ENCODE measurements at regions of chr15 and their contacts with region 1.

Region 1: DNA sequence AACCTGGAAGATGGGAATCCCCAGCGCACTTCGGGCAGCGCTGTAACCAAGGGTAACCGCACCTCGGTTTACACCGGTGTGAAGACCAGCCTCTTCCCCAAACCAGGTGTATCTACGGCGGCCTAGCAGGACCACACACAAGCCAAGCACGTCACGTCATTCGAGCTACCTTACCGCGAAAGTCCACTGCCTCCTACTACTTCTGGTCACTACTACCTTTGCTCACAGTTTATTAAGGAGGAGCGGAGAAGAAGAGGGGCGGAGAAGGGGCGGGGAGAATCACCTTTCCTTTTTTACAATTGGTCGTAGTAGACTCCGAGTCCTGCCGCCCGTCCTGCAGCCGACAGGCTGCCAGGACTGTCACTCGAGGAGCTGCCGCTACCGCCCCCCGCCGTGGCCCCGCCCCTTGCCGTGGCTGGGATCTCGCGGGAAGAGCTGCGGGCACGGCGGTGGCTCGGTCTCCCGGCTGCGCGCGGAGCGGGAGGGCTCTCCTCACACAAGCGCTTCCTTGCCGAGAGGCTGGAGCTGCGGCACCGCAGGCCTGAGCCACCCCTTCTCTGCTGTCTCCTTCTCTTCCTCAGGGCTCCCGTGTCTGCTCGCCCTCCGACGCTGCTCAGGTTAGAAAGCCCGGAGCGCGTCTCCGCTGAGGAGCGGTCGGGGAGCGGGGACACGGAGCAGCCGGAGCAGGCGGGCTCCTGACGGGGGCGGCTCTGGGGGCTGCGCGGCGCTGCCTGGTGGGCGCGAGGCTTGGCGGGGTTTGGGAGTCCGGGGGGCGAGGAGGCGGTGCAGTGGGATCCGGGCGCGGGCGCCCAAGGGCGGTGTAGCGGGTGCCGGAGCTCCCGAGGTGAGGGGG is at the start of gene GLCE:
- DNase-seq: peak; percentile 89 to 96 (median 94)
- ATAC-seq: peak; percentile 97
- H3K4me3 ChIP-seq: peak within 1 kb of the TSS; percentile 92
- H3K4me3 Mint-ChIP-seq: peak within 1 kb of the TSS; percentile 90 to 100 (median 97)
- H3K27ac ChIP-seq: peak within 1 kb of the TSS; percentile 76
- H3K27ac Mint-ChIP-seq: peak within 1 kb of the TSS; percentile 76 to 98 (median 90)
- H3K4me1 ChIP-seq: peaks cover 5 to 7% of the 10 kb centered on the region in 2 donors
- H3K4me1 Mint-ChIP-seq: peaks cover 12 to 22% (median 18%) of the 10 kb centered on the region in 7 donors
- H3K27me3 ChIP-seq: no peaks in the 10 kb centered on the region
- H3K27me3 Mint-ChIP-seq: peaks cover 0 to 44% (median 4%) of the 10 kb centered on the region in 5 donors
- total RNA-seq, gene GLCE: 3.0 to 6.1 (median 5.4) TPM

Region 2: DNA sequence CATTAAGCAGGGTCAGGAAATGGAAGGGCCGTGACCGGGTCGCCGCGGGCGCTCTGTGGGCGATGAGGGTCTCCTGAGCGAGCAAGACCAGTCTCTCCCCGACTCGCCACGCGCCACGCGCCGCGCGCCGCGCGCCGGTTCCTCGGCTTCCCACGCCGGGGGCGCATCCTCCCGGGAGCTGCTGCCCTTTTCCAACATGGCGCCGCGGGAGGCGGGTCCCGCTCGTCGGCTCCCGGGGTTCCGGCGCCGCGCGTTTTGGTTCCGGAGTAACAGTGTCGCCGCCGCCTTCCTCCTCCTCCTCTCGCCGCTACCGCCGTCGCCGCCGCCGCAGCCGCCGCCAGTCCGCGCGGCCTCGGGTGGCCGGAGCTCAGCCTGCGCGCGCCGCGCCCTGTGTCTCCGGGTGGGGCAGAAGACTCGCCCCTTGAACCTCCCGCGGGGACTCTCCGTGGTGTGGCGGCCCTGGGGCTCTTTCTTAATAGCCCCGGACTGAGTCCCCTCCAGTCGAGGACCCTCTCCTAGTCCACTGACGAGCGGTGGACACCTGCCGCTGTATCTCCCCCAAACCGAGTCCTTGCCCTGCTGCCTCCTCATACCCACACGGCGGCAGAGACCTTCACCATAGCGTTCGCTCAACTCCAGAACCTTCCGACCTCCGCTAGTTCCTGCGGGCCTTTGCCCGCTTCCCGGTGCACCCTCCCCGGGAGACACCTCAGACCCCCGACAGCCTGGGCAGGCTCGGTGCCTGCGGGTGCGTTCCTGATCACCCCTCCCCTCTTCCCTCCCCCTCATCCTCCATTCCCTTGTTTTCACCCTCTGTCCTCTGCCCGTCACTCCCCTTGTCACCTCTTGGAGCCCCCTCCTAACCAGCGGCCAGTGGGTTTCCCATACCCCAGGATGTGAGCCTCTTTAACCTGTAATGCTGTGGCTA is 1617.7 kb before region 1 on chr15 and contains the start of gene MAP2K5:
- CTCF ChIA-PET with region 1: no interaction called
- POLR2A ChIA-PET with region 1: no interaction called
- intact Hi-C with region 1: loop called in 1 of 2 experiments (anchors 5 kb)
- DNase-seq: peak; percentile 75 to 87 (median 78)
- ATAC-seq: peak; percentile 89
- H3K4me3 ChIP-seq: peak within 1 kb of the TSS; percentile 90
- H3K4me3 Mint-ChIP-seq: peak within 1 kb of the TSS; percentile 92 to 98 (median 98)
- H3K27ac ChIP-seq: peak within 1 kb of the TSS; percentile 78
- H3K27ac Mint-ChIP-seq: peak within 1 kb of the TSS; percentile 97 to 100 (median 99)
- H3K4me1 ChIP-seq: peaks cover 7 to 22% of the 10 kb centered on the region in 2 donors
- H3K4me1 Mint-ChIP-seq: peaks cover 20 to 68% (median 56%) of the 10 kb centered on the region in 7 donors
- H3K27me3 ChIP-seq: no peaks in the 10 kb centered on the region
- H3K27me3 Mint-ChIP-seq: no peaks in the 10 kb centered on the region
- total RNA-seq, gene MAP2K5: 23.4 to 43.4 (median 35.7) TPM

Region 3: GRCh38 chr15:69058830-69059556 is 101.4 kb before region 1 on chr15:
- CTCF ChIA-PET with region 1: no interaction called
- POLR2A ChIA-PET with region 1: no interaction called
- intact Hi-C with region 1: loop called in 1 of 2 experiments (anchors 1 kb)
- DNase-seq: peak; percentile 29 to 69 (median 59)
- ATAC-seq: peak; percentile 66
- H3K4me3 ChIP-seq: no peak overlapping the region
- H3K4me3 Mint-ChIP-seq: peak overlapping the region in 5 of 10 donors; percentile 21 to 61 (median 52)
- H3K27ac ChIP-seq: no peak overlapping the region
- H3K27ac Mint-ChIP-seq: peak overlapping the region in 4 of 9 donors; percentile 30 to 78 (median 58)
- H3K4me1 ChIP-seq: peaks cover 7 to 23% of the 10 kb centered on the region in 2 donors
- H3K4me1 Mint-ChIP-seq: peaks cover 5 to 38% (median 33%) of the 10 kb centered on the region in 7 donors
- H3K27me3 ChIP-seq: no peaks in the 10 kb centered on the region
- H3K27me3 Mint-ChIP-seq: peaks cover 0 to 18% (median 5%) of the 10 kb centered on the region in 5 donors

Region 4: DNA sequence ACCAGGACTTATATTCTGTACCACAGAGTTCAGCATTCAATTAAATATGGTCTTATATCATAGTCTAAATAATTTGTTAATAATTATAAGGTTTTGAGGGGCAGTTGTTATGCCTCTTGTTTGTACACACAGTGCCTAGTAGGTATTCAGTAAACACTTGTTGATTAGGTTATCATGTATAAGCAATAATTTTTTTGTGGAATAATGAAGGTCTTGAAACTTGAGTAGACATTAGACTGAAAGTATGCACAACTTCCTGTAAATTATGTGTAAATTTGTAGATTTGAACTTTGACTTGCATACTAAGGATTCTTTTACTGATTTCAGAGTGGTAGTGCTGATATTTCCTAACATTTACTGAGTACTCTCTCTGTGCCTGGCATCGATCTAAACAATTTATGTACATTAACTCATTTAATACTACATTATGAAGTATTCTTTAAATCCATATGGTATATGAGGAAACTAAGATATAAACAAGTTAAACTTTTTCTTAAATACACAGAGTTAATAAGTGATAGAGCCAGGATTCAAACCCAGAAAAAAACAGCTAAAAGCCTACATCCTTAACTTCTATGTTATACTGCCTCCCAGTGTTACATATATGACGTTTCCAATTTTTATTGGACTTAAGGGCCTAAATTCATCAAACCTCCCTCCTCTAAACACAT is 65.1 kb after region 1 on chr15:
- CTCF ChIA-PET with region 1: no interaction called
- POLR2A ChIA-PET with region 1: no interaction called
- intact Hi-C with region 1: no loop called
- DNase-seq: no peak
- ATAC-seq: no peak
- H3K4me3 ChIP-seq: no peak overlapping the region
- H3K4me3 Mint-ChIP-seq: no peak overlapping the region
- H3K27ac ChIP-seq: no peak overlapping the region
- H3K27ac Mint-ChIP-seq: no peak overlapping the region
- H3K4me1 ChIP-seq: no peaks in the 10 kb centered on the region
- H3K4me1 Mint-ChIP-seq: no peaks in the 10 kb centered on the region
- H3K27me3 ChIP-seq: no peaks in the 10 kb centered on the region
- H3K27me3 Mint-ChIP-seq: peaks cover 0 to 4% (median 0%) of the 10 kb centered on the region in 5 donors

Region 5: GRCh38 chr15:69394556-69395282 is 234.4 kb after region 1 on chr15:
- CTCF ChIA-PET with region 1: no interaction called
- POLR2A ChIA-PET with region 1: no interaction called
- intact Hi-C with region 1: loop called in 1 of 2 experiments (anchors 1 kb)
- DNase-seq: peak; percentile 44 to 86 (median 71)
- ATAC-seq: peak; percentile 97
- H3K4me3 ChIP-seq: no peak overlapping the region
- H3K4me3 Mint-ChIP-seq: no peak overlapping the region
- H3K27ac ChIP-seq: no peak overlapping the region
- H3K27ac Mint-ChIP-seq: peak overlapping the region in 1 of 9 donors; percentile 6
- H3K4me1 ChIP-seq: no peaks in the 10 kb centered on the region
- H3K4me1 Mint-ChIP-seq: peaks cover 6 to 12% (median 7%) of the 10 kb centered on the region in 7 donors
- H3K27me3 ChIP-seq: no peaks in the 10 kb centered on the region
- H3K27me3 Mint-ChIP-seq: peaks cover 0 to 8% (median 0%) of the 10 kb centered on the region in 5 donors

Region 6: GRCh38 chr15:69452692-69453521 is 292.5 kb after region 1 on chr15 and contains the start of gene RPLP1:
- CTCF ChIA-PET with region 1: no interaction called
- POLR2A ChIA-PET with region 1: interaction called, 4 read pairs
- intact Hi-C with region 1: loop called (anchors 1 to 2 kb)
- DNase-seq: peak; percentile 93 to 97 (median 96)
- ATAC-seq: peak; percentile 93
- H3K4me3 ChIP-seq: peak within 1 kb of the TSS; percentile 82
- H3K4me3 Mint-ChIP-seq: peak within 1 kb of the TSS; percentile 91 to 100 (median 99)
- H3K27ac ChIP-seq: peak within 1 kb of the TSS; percentile 84
- H3K27ac Mint-ChIP-seq: peak within 1 kb of the TSS; percentile 96 to 100 (median 98)
- H3K4me1 ChIP-seq: peaks cover 14 to 33% of the 10 kb centered on the region in 2 donors
- H3K4me1 Mint-ChIP-seq: peaks cover 29 to 52% (median 42%) of the 10 kb centered on the region in 7 donors
- H3K27me3 ChIP-seq: no peaks in the 10 kb centered on the region
- H3K27me3 Mint-ChIP-seq: no peaks in the 10 kb centered on the region
- total RNA-seq, gene RPLP1: 1,719 to 2,941 (median 2,467) TPM

Region 7: GRCh38 chr15:69475769-69476358 is 315.5 kb after region 1 on chr15:
- CTCF ChIA-PET with region 1: no interaction called
- POLR2A ChIA-PET with region 1: no interaction called
- intact Hi-C with region 1: no loop called
- DNase-seq: peak; percentile 39 to 77 (median 63)
- ATAC-seq: peak; percentile 90
- H3K4me3 ChIP-seq: no peak overlapping the region
- H3K4me3 Mint-ChIP-seq: no peak overlapping the region
- H3K27ac ChIP-seq: no peak overlapping the region
- H3K27ac Mint-ChIP-seq: no peak overlapping the region
- H3K4me1 ChIP-seq: no peaks in the 10 kb centered on the region
- H3K4me1 Mint-ChIP-seq: peaks cover 0 to 5% (median 0%) of the 10 kb centered on the region in 7 donors
- H3K27me3 ChIP-seq: no peaks in the 10 kb centered on the region
- H3K27me3 Mint-ChIP-seq: peaks cover 0 to 29% (median 0%) of the 10 kb centered on the region in 5 donors

Measured in naive thymus-derived CD4-positive, alpha-beta T cell (primary cell).